HEK293 (cell line): ENCODE measurements at regions of chr15 and their contacts with region 1.

Region 1: GRCh38 chr15:51132384-51133139 is 37.9 kb upstream of the TNFAIP8L3 start:
- H3K4me3 ChIP-seq: no peak overlapping the region
- H3K27ac ChIP-seq: no peak overlapping the region
- H3K4me1 ChIP-seq: no peaks in the 10 kb centered on the region
- CTCF ChIP-seq: peak; percentile 31; the same call in 1 of the 2 replicates

Region 2: DNA sequence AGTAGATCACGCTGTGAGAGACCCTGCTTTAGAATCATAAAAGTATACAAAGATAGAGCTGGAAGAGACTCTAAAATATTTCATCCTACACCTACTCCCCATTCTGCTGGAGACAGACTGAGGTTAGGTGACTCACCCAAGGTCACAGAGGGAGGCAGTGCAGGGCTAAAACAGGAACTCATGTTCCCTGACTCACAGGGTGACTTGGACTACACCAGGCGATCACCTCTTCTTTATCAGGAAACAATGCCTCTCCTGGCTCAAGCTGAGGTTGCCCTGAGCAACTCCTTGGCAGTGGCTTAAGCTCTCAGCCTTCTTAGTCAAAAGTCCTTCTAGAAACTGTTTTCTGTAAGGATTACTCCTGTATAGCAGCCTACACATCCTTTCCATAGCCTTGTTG is 11.4 kb before region 1 on chr15:
- CTCF ChIA-PET with region 1: interaction called, 14 read pairs
- POLR2A ChIA-PET with region 1: no interaction called
- H3K4me3 ChIP-seq: no peak overlapping the region
- H3K27ac ChIP-seq: no peak overlapping the region
- H3K4me1 ChIP-seq: no peaks in the 10 kb centered on the region
- CTCF ChIP-seq: no peak

Region 3: GRCh38 chr15:51144021-51144532 is 11.5 kb after region 1 on chr15:
- CTCF ChIA-PET with region 1: interaction called, 10 read pairs
- POLR2A ChIA-PET with region 1: no interaction called
- H3K4me3 ChIP-seq: no peak overlapping the region
- H3K27ac ChIP-seq: no peak overlapping the region
- H3K4me1 ChIP-seq: no peaks in the 10 kb centered on the region
- CTCF ChIP-seq: no peak

Region 4: GRCh38 chr15:51192521-51193280 is 60.1 kb after region 1 on chr15:
- CTCF ChIA-PET with region 1: interaction called, 11 read pairs
- POLR2A ChIA-PET with region 1: no interaction called
- H3K4me3 ChIP-seq: no peak overlapping the region
- H3K27ac ChIP-seq: no peak overlapping the region
- H3K4me1 ChIP-seq: no peaks in the 10 kb centered on the region; the same call in 1 of the 2 replicates
- CTCF ChIP-seq: peak; percentile 62; the same call in 1 of the 2 replicates